Gastrocnemius medialis (tissue), 4 donors: ENCODE measurements at regions of chrX and their contacts with region 1.

Region 1: GRCh38 chrX:25640276-25640675 is 497.9 kb upstream of the MAGEB18 start:
- DNase-seq: no peak
- ATAC-seq: no peak
- H3K4me3 ChIP-seq: no peak overlapping the region
- H3K27ac ChIP-seq: no peak overlapping the region
- H3K4me1 ChIP-seq: no peaks in the 10 kb centered on the region
- H3K27me3 ChIP-seq: no peaks in the 10 kb centered on the region
- CTCF ChIP-seq: no peak
- POLR2A ChIP-seq: no peak

Region 2: DNA sequence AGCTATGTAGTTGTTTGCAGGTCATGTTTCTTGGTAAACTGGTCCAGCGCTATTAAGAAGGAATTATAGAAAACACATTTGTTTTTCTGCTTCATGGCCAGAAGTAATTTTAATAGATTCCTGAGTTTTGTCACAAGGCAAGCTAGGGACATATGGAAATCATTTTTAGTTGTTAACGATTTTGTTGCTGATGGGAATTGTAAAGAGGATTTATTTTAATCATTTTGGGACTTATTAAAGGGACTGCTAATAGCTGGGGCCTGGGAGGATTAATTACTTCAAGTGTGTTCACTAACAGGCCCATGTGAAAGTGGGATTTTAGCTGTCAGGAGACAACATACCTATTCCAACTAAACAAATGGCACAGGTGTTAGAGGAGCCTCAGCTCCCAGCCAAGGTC is 132.5 kb before region 1 on chrX:
- in situ Hi-C with region 1: no loop called
- intact Hi-C with region 1: no loop called
- DNase-seq: no peak
- ATAC-seq: no peak
- H3K4me3 ChIP-seq: no peak overlapping the region
- H3K27ac ChIP-seq: no peak overlapping the region
- H3K4me1 ChIP-seq: no peaks in the 10 kb centered on the region
- H3K27me3 ChIP-seq: no peaks in the 10 kb centered on the region
- CTCF ChIP-seq: no peak
- POLR2A ChIP-seq: no peak

Region 3: DNA sequence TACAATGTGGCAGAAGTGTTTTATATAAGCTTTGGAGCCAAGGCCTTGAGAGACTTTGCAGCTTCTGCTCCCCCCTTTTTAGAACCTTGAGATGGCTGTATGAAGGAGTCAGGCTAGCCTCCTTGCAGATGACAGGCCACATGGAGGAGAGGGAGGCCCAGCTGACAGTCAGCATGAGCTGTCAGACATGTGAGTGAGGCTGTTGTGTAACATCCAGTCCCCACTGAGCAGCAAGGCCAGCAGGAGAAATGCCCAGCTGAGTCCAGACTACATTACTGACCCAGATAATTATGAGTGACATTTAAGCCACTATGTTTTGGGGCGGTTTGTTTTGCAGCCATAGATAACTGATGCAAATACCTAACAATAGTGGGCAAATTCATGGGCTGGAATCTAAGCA is 109.2 kb before region 1 on chrX:
- in situ Hi-C with region 1: loop called in 1 of 4 experiments (anchors 25 kb)
- intact Hi-C with region 1: no loop called
- DNase-seq: peak in 1 of 2 donors; percentile 14
- ATAC-seq: no peak
- H3K4me3 ChIP-seq: no peak overlapping the region
- H3K27ac ChIP-seq: no peak overlapping the region
- H3K4me1 ChIP-seq: no peaks in the 10 kb centered on the region
- H3K27me3 ChIP-seq: no peaks in the 10 kb centered on the region
- CTCF ChIP-seq: no peak
- POLR2A ChIP-seq: no peak